ENCODE measurements at regions of chr1 and their contacts with region 1.

Region 1: DNA sequence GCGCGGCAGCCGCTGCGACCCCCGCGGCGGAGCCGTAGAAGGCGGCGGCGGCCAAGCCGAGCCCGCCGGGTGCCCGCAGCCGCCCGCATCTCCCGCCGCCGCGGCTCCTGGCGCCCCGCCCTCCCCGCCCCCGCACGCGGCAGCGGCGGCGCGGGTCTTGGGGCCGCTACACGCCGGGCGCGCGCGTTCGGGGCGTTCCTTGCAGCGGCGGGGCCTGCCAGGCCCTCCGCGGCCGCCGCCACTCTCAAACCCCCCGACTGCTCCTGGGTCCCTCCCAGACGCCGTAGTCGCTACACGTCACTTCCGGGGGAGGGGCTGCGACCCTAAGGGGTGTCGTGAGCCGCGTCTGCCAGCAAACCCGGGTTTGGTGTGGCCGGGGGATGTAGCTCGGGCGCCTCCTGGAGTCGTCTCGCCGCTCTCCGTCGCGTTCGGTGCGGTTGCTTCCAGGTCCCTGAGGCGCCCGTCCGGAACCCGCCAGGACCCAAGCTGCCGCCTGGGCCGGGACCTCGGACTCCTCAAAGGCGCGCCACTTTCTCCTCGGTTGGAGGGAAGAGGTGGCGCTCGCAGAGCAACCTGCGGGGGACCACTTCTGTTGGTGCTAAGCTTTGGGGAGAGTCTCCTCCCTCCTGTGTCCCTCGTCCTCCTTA is at the start of gene ELK4:
- DNase-seq: peak; percentile 98 to 100 (median 100)
- ATAC-seq: peak; percentile 77 to 81
- H3K4me3 Mint-ChIP-seq: peak within 1 kb of the TSS; percentile 82 to 99 (median 97)
- H3K27ac Mint-ChIP-seq: peak within 1 kb of the TSS; percentile 91 to 99 (median 98)
- H3K4me1 Mint-ChIP-seq: peaks cover 11 to 48% (median 39%) of the 10 kb centered on the region in 4 donors
- H3K27me3 Mint-ChIP-seq: no peaks in the 10 kb centered on the region
- polyA plus RNA-seq, gene ELK4: 4.5 to 8.3 (median 5.8) TPM

Region 2: GRCh38 chr1:205528887-205529825 is 102.7 kb before region 1 on chr1:
- POLR2A ChIA-PET with region 1: interaction called, 11 read pairs
- DNase-seq: peak; percentile 62 to 90 (median 84)
- ATAC-seq: peak; percentile 91 to 97
- H3K4me3 Mint-ChIP-seq: peak overlapping the region; percentile 32 to 75 (median 58)
- H3K27ac Mint-ChIP-seq: peak overlapping the region in 4 of 10 donors; percentile 57 to 79 (median 60)
- H3K4me1 Mint-ChIP-seq: peaks cover 0 to 9% (median 7%) of the 10 kb centered on the region in 4 donors
- H3K27me3 Mint-ChIP-seq: no peaks in the 10 kb centered on the region

Region 3: GRCh38 chr1:205578780-205579606 is 52.9 kb before region 1 on chr1:
- POLR2A ChIA-PET with region 1: no interaction called
- DNase-seq: no peak
- ATAC-seq: no peak
- H3K4me3 Mint-ChIP-seq: no peak overlapping the region
- H3K27ac Mint-ChIP-seq: no peak overlapping the region
- H3K4me1 Mint-ChIP-seq: peaks cover 7 to 24% (median 21%) of the 10 kb centered on the region in 4 donors
- H3K27me3 Mint-ChIP-seq: peaks cover 3 to 22% (median 12%) of the 10 kb centered on the region in 5 donors

Region 4: DNA sequence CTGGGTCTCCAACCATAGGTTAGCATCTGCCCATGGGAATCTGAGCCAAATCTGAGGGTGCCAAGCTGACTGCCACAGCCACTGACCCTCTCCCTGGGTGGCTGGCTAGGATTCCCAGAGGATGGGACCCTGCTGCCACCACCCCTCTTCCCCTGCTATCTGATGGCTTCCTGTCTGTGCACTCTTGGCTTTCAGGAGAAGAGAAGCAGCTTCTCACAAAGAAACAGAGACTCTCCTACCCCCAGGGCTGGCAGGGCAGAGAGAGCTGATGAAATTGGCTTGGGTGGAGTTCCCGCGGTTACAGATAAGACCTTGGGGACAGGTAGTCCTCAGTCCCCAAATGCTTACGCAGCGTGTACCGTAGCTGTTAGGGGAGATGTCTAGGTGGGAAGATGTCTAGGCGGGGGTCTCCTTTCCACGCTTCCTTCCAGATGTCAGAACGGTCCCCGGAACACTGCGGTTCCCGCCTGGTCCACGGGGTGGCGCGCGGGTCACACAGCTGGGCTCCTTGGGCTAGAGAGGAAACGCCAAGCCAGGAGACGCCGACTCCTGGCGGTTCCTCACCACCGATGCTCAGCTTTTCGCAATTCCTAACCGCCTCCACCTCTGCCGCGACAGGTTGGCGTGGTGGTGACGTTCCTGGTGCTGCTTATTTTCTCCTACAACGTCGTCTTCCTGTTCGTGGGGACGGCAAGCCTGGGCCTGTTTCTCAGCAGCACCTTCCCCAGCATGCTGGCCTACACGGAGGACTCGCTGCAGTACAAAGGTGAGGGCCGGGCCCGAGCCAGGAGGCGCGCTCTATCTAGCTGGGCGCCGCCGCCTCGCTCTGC is 40.1 kb before region 1 on chr1:
- POLR2A ChIA-PET with region 1: interaction called, 269 read pairs
- DNase-seq: peak; percentile 82 to 97 (median 90)
- ATAC-seq: peak; percentile 79 to 85
- H3K4me3 Mint-ChIP-seq: peak overlapping the region; percentile 84 to 96 (median 93)
- H3K27ac Mint-ChIP-seq: peak overlapping the region; percentile 93 to 98 (median 96)
- H3K4me1 Mint-ChIP-seq: peaks cover 35 to 57% (median 53%) of the 10 kb centered on the region in 4 donors
- H3K27me3 Mint-ChIP-seq: no peaks in the 10 kb centered on the region

Region 5: DNA sequence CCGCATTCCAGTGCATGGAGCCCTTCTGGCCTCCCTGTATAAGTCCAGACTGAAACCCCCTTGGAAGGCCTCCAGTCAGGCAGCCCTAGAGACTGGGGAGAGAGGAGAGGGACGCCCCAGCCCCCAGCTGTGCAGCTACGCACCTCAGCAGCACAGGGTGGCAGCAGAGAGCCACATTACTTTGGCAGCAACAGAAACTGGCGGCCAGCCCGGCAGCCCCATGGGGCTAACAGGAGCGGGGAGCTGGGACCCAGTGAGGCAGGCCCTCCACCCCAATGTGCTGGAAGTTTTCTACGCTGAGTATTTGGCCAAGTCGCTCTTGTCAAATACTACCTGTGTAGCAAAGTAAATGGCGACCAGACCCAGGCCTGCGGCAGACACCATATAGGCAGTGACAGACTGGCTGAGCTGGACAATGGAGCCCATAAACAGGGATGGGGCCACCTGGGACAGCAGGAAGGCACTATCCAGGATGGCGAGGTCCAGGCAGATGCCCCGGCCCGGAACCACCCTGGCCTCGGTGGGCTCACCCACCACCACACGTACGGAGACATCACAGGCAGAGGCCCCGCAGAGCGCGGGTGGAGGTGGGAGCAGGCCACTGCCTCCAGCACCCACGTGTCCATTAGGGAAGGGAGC is 27.2 kb after region 1 on chr1:
- POLR2A ChIA-PET with region 1: interaction called, 20 read pairs
- DNase-seq: peak; percentile 57 to 84 (median 69)
- ATAC-seq: peak; percentile 95 to 98
- H3K4me3 Mint-ChIP-seq: no peak overlapping the region
- H3K27ac Mint-ChIP-seq: peak overlapping the region in 1 of 10 donors; percentile 38
- H3K4me1 Mint-ChIP-seq: peaks cover 0 to 7% (median 5%) of the 10 kb centered on the region in 4 donors
- H3K27me3 Mint-ChIP-seq: peaks cover 0 to 1% (median 0%) of the 10 kb centered on the region in 5 donors

Region 6: GRCh38 chr1:205775015-205775716 is 143.3 kb after region 1 on chr1 and contains the start of gene RAB29:
- POLR2A ChIA-PET with region 1: interaction called, 21 read pairs
- DNase-seq: peak; percentile 71 to 93 (median 87)
- ATAC-seq: peak; percentile 87
- H3K4me3 Mint-ChIP-seq: peak within 1 kb of the TSS; percentile 89 to 99 (median 94)
- H3K27ac Mint-ChIP-seq: peak within 1 kb of the TSS; percentile 97 to 98 (median 98)
- H3K4me1 Mint-ChIP-seq: peaks cover 28 to 68% (median 61%) of the 10 kb centered on the region in 4 donors
- H3K27me3 Mint-ChIP-seq: no peaks in the 10 kb centered on the region
- polyA plus RNA-seq, gene RAB29: 71.3 to 113 (median 84.6) TPM